HCT116 (cell line): ENCODE measurements at regions of chr18 and their contacts with region 1.

Region 1: DNA sequence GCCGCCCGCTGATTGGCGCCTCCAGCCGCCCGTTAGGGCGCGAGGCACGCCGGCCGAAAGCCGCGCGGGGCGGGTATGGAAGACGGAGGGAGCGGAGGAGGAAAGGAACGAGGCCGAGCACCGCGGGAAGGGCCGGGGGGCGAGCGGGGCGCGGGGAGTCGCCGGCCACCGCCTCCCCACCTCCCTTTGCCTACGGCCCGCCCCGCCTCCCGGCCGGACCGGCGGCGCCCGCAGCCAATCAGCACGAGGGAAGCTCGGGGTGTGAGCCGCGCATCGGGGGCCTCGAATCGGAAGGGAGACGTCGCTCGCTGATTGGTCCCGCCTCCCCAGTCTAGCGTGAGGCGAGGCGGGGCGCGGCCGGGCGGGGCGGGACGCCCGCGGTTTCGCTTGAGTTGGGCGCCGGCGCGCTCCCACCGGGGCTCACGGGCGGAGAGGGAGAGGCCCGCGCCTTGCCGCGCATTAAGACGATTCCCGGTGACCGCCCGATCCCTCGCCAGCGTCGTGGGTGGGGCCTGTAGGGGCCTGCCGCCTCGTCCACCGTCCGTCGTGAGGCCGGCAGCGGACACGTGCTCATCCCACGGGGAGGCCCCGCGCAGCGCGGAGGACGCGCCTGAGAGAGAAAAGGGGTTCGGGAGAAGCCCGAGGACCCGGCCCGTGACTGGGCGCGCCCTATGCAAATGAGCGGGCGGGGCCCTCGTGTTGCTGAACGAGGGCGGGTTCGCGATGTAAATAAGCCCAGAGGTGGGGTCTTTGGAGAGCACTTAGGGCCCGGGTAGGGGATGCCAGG is 665 bp upstream of the SMAD2 start:
- DNase-seq: peak; percentile 85
- ATAC-seq: peak; percentile 84
- H3K4me3 ChIP-seq: peak overlapping the region; percentile 31 to 48
- H3K27ac ChIP-seq: peak overlapping the region; percentile 97
- H3K4me1 ChIP-seq: peaks cover 7 to 25% of the 10 kb centered on the region in 2 experiments
- H3K27me3 ChIP-seq: no peaks in the 10 kb centered on the region
- CTCF ChIP-seq: no peak
- POLR2A ChIP-seq: no peak
- RAD21 ChIP-seq: no peak

Region 2: GRCh38 chr18:47724186-47724975 is 206.7 kb before region 1 on chr18:
- CTCF ChIA-PET with region 1: no interaction called
- POLR2A ChIA-PET with region 1: no interaction called
- RAD21 ChIA-PET with region 1: no interaction called
- intact Hi-C with region 1: no loop called
- DNase-seq: no peak
- ATAC-seq: no peak
- H3K4me3 ChIP-seq: no peak overlapping the region
- H3K27ac ChIP-seq: no peak overlapping the region
- H3K4me1 ChIP-seq: no peaks in the 10 kb centered on the region
- H3K27me3 ChIP-seq: peaks cover 74% of the 10 kb centered on the region
- CTCF ChIP-seq: no peak
- POLR2A ChIP-seq: no peak
- RAD21 ChIP-seq: no peak

Region 3: DNA sequence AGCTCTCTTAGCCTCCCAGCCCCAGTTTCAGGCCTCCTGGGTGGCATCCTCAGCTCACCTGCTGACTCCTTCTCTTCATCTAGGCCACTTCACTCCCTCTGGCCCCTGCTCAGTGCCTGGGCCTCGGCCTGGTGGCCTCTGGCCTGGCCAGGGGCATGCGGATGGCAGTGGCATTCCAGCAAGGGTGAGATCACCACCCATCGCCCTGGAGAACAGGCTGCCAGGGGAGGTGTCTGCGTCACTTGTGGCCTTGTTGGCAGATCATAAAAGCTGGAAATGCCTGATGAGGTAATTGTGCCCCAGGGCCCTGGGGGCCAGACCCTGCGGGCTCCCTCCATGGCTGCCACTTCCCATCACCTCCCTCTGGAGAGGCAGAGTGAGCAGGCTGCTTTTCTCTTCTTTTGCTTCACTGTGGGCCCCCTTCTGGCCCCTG is 71.8 kb after region 1 on chr18:
- CTCF ChIA-PET with region 1: no interaction called
- POLR2A ChIA-PET with region 1: no interaction called
- RAD21 ChIA-PET with region 1: no interaction called
- intact Hi-C with region 1: loop called (anchors 2 kb)
- DNase-seq: peak; percentile 77
- ATAC-seq: peak; percentile 84
- H3K4me3 ChIP-seq: peak overlapping the region in 1 of 2 experiments; percentile 25; a peak in 1 of 4 replicates
- H3K27ac ChIP-seq: peak overlapping the region; percentile 62
- H3K4me1 ChIP-seq: peaks cover 30 to 38% of the 10 kb centered on the region in 2 experiments
- H3K27me3 ChIP-seq: no peaks in the 10 kb centered on the region
- CTCF ChIP-seq: no peak
- POLR2A ChIP-seq: no peak
- RAD21 ChIP-seq: no peak

Region 4: DNA sequence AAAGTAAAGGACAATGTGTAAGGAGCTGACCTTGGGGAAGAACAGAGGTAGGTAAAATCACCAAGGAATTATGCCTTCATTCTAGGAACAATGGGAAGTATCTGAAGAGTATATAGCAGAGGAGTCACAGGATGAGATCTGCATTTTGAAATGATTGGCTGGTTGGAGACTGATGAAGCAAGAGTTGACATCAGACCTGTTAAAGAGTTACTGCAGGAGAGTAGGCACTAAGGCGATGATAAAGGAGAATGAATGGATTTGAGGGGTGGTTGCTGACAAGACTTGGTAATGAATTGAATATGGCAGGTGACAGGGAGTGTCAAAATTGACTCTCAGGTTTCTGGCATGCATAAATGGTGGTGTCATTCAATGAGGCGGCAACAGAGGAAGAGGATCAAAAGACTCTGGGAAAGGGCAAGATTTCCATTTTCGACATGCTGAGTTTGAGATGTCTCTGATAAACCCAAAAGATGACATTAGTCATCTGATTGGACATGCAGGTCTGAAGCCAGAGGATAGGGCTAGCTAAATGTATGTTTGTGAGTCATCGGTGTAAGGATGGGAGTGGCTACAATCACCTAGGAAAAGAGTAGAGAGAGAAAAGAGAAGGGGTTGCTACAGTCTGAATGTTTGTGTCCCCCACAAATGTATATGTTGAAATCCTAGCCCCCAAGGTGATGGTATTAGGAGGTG is 1292.9 kb after region 1 on chr18:
- CTCF ChIA-PET with region 1: no interaction called
- POLR2A ChIA-PET with region 1: no interaction called
- RAD21 ChIA-PET with region 1: no interaction called
- intact Hi-C with region 1: no loop called
- DNase-seq: no peak
- ATAC-seq: no peak
- H3K4me3 ChIP-seq: no peak overlapping the region
- H3K27ac ChIP-seq: no peak overlapping the region
- H3K4me1 ChIP-seq: no peaks in the 10 kb centered on the region; a peak in 1 of 4 replicates
- H3K27me3 ChIP-seq: no peaks in the 10 kb centered on the region
- CTCF ChIP-seq: no peak
- POLR2A ChIP-seq: no peak
- RAD21 ChIP-seq: no peak